ENCODE measurements at regions of chr16 and their contacts with region 1.

Region 1: GRCh38 chr16:66728117-66728787 is 23.2 kb downstream of the DYNC1LI2 start:
- DNase-seq: peak in 1 of 2 donors; percentile 41
- ATAC-seq: peak; percentile 84

Region 2: GRCh38 chr16:66859397-66860068 is 131.3 kb after region 1 on chr16:
- intact Hi-C with region 1: loop called in 1 of 2 experiments (anchors 10 kb)
- DNase-seq: no peak
- ATAC-seq: no peak